ENCODE measurements at regions of chr1 and their contacts with region 1.

Region 1: DNA sequence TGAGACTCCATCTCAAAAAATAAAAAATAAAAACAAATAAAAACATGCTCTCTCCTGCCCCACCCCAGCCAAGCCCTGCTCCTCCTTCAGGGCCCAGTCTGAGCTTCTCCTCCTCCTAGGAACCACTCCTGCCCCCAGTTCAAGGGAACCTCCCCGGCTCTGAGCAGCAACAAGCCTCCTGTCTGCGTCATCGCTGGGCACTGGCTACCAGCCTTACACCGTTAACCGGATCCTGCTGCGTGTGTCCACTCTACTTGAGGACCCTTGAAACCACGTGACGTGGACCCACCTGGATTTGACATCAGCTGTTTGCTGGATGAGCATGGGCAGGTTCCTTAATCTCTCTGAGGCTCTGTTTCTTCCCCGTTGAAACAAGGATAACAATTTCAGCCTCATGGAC is 1.6 kb upstream of the TAS1R2 start:
- DNase-seq: no peak
- ATAC-seq: no peak
- H3K4me3 ChIP-seq: no peak overlapping the region
- H3K27ac ChIP-seq: no peak overlapping the region
- H3K4me1 ChIP-seq: no peaks in the 10 kb centered on the region
- H3K27me3 ChIP-seq: peaks cover 0 to 10% (median 0%) of the 10 kb centered on the region in 9 donors
- CTCF ChIP-seq: no peak
- POLR2A ChIP-seq: no peak

Region 2: DNA sequence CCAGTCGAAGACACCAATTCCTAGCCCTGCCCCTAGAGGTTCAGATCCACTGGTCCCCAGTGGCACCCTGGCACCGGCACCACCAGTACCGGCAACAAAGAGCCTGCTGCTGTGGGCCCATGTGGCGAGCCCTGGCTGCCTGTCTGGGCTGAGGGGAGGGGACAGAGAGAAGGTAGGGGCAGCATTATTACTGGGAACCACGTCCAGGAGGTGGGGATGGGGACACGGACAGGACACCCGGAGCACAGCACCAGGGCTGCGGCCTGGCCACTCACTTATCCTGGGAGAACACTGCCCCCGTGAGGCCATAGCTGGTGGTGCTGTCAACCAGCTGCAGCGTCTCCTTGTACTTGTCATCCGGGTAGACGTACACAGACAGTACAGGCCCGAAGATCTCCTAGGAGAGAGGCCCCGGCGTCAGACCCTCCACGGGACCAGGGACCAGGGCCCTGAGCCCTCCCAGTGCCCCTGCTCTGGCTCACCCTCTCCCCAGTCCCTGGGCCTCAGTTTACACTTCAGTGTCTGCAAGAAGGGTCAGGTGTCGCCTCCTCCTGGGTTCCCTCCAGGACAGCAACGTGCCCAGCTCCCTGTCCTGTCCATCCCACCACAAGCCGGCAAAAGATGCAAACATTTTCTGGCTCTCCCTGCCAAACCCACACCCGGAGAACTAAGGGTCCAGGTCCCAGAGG is 14.2 kb after region 1 on chr1:
- intact Hi-C with region 1: loop called in 1 of 10 experiments (anchors 1 kb)
- DNase-seq: peak; percentile 56 to 88 (median 81)
- ATAC-seq: peak; percentile 47 to 86 (median 73)
- H3K4me3 ChIP-seq: no peak overlapping the region
- H3K27ac ChIP-seq: no peak overlapping the region
- H3K4me1 ChIP-seq: peaks cover 0 to 8% (median 0%) of the 10 kb centered on the region in 12 donors
- H3K27me3 ChIP-seq: no peaks in the 10 kb centered on the region
- CTCF ChIP-seq: peak; percentile 72 to 90 (median 84)
- POLR2A ChIP-seq: no peak

Measured in heart left ventricle (tissue), 16 donors.